ENCODE measurements at regions of chr19 and their contacts with region 1.

Region 1: GRCh38 chr19:52993323-52994178 is 20.2 kb upstream of the ERVV-1 start:
- DNase-seq: peak; percentile 76
- H3K4me3 ChIP-seq: peak overlapping the region; percentile 51 to 71 (median 64)
- H3K27ac ChIP-seq: peak overlapping the region; percentile 81
- H3K4me1 ChIP-seq: peaks cover 20% of the 10 kb centered on the region
- H3K27me3 ChIP-seq: no peaks in the 10 kb centered on the region
- CTCF ChIP-seq: peak in 1 of 2 donors; percentile 59
- POLR2A ChIP-seq: peak; percentile 69

Region 2: DNA sequence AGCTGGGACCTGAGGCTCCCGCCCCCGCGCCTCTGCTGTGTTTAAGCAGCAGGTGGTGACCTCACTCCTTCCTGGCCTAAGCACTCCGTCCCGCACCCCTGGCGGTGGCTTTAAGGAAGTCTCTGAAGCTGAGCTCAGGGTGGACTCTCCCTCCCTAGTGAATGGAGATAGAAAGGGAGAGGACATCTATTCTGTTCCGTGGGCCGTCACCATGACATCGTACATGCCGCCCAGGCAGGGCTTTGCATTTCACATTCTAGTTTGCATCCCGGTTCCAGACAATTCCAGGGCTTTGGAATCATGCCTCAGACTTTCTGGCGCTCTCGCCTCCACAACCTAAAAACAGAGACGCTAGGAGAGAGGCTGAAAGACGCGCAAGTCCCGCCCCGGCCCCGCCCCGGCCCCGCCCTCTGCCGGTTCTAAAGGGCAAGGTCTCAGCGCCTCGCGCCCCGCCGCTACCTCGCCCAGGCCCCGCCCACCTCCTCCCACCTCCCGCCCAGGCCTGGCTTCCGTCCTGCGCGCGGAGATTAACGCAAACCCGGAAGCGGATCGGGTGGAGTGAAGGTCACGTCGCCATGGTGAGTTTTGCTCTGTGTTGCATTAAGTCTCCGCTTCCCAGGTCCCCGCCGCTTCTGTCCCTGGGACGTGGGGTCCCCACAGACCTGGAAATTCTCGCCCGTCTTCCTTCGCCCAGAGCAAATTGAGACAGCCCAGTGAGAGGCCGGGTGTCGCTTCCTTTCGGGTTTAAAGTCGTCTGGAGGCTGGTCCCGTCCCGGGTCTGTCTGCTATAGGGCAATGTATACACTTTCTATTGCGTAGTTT is 466.2 kb before region 1 on chr19 and contains the start of gene ZNF808:
- CTCF ChIA-PET with region 1: no interaction called
- POLR2A ChIA-PET with region 1: no interaction called
- dilution Hi-C with region 1: no loop called
- intact Hi-C with region 1: loop called (anchors 5 kb)
- DNase-seq: peak; percentile 88
- H3K4me3 ChIP-seq: peak within 1 kb of the TSS; percentile 70 to 86 (median 83)
- H3K27ac ChIP-seq: peak within 1 kb of the TSS; percentile 78
- H3K4me1 ChIP-seq: peaks cover 3% of the 10 kb centered on the region
- H3K27me3 ChIP-seq: no peaks in the 10 kb centered on the region
- CTCF ChIP-seq: peak; percentile 59 to 61
- POLR2A ChIP-seq: peak; percentile 78
- total RNA-seq, gene ZNF808: 13.6 and 15.2 TPM in 2 replicates

Region 3: DNA sequence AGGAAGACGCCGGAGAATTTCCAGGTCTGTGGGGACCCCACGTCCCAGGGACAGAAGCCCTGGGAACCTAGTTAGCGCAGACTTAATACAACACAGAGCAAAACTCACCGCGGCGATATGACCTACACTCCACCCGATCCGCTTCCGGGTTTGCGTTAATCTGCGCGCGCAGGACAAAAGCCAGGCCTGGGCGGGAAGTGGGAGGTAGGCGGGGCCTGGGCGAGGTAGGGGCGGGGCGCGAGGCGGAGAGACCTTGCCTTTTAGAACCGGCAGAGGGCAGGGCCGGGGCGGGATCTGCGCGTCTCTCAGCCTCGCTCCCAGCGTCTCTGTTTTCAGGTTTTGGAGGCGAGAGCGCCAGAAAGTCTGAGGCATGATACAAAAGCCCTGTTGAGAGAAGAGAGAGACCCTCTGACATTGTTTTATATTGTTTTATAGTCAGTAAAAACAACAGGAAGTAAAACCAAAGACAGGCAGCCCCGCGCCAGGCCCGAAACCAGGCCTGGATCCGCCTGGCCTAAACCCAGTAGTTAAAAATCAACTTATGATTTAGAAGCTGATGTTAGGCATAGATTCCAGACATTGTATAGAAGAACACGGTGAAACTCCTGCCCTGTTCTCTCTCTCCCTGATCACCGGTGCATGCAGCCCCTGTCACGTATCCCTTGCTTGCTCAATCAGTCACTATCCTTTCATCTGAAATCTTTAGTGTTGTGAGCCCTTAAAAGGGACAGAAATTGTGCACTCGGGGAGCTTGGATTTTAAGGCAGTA is 258.5 kb before region 1 on chr19 and contains the start of gene ZNF611:
- CTCF ChIA-PET with region 1: no interaction called
- POLR2A ChIA-PET with region 1: no interaction called
- dilution Hi-C with region 1: no loop called
- intact Hi-C with region 1: loop called (anchors 1 kb)
- DNase-seq: peak; percentile 97
- H3K4me3 ChIP-seq: peak within 1 kb of the TSS; percentile 47 to 96 (median 93)
- H3K27ac ChIP-seq: peak within 1 kb of the TSS; percentile 84
- H3K4me1 ChIP-seq: peaks cover 9% of the 10 kb centered on the region
- H3K27me3 ChIP-seq: no peaks in the 10 kb centered on the region
- CTCF ChIP-seq: peak; percentile 55 to 73
- POLR2A ChIP-seq: peak; percentile 90
- total RNA-seq, gene ZNF611: 20.0 and 24.2 TPM in 2 replicates

Region 4: DNA sequence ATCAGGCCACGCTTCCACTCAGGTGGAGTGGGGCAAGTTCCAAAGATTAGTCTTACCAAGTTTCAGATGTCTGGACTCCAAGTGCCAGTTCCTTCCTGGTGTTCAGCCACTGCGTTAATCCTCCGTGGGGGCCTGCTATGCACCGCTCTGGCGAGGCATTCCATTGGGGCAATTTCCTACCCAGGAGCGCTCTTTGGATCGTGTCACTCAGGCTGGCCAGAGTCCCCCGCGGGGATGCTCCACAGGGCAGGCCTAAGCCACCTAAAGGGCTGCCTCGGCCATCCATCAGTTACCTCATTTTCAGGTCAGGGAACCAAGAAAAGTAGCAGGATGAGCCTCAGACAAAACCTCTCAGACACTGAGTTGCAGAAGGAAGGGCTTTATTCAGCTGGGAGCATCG is 89.5 kb before region 1 on chr19:
- CTCF ChIA-PET with region 1: no interaction called
- POLR2A ChIA-PET with region 1: no interaction called
- dilution Hi-C with region 1: no loop called
- intact Hi-C with region 1: no loop called
- DNase-seq: no peak
- H3K4me3 ChIP-seq: no peak overlapping the region
- H3K27ac ChIP-seq: no peak overlapping the region
- H3K4me1 ChIP-seq: no peaks in the 10 kb centered on the region
- H3K27me3 ChIP-seq: no peaks in the 10 kb centered on the region
- CTCF ChIP-seq: no peak
- POLR2A ChIP-seq: no peak

Region 5: DNA sequence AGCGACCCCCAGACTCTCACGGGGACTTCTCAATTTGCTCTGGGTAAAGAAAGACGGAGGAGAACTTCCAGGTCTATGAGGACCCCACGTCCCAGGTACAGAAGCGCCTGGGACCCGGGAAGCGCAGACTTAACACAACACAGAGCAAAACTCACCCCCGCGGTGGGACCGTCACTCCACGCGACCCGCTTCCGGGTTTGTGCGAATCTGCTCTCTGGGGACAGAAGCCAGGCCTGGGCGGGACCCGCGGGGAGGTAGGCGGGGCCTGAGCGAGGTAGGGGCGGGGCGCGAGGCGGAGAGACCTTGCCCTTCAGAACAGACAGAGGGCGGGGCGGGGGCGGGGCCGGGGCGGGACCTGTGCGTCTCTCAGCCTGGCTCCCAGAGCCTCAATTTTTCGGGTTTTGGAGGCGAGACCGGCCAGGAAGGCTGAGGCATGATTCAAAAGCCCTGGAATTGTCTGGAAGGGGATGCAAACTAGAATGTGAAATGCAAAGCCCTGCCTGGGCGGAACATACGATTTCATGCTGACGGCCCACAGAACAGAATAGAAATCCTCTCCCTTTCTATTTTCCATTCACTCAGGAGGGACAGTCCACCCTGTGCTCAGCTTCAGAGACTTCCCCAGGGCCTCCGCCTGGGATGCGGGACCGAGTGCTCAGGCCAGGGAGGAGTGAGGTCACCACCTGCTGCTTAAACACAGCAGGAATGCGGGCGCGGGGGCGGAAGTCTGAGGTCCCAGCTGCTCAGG is 51.0 kb before region 1 on chr19:
- CTCF ChIA-PET with region 1: no interaction called
- POLR2A ChIA-PET with region 1: no interaction called
- dilution Hi-C with region 1: no loop called
- intact Hi-C with region 1: loop called (anchors 1 kb)
- DNase-seq: peak; percentile 85
- H3K4me3 ChIP-seq: peak overlapping the region; percentile 76 to 94 (median 87)
- H3K27ac ChIP-seq: peak overlapping the region; percentile 65
- H3K4me1 ChIP-seq: no peaks in the 10 kb centered on the region
- H3K27me3 ChIP-seq: no peaks in the 10 kb centered on the region
- CTCF ChIP-seq: no peak
- POLR2A ChIP-seq: peak; percentile 60

Region 6: GRCh38 chr19:53086949-53087348 is 93.4 kb after region 1 on chr19:
- CTCF ChIA-PET with region 1: interaction called, 3 read pairs
- POLR2A ChIA-PET with region 1: no interaction called
- dilution Hi-C with region 1: no loop called
- intact Hi-C with region 1: loop called (anchors 5 kb)
- DNase-seq: peak; percentile 94
- H3K4me3 ChIP-seq: no peak overlapping the region
- H3K27ac ChIP-seq: peak overlapping the region; percentile 92
- H3K4me1 ChIP-seq: peaks cover 23% of the 10 kb centered on the region
- H3K27me3 ChIP-seq: no peaks in the 10 kb centered on the region
- CTCF ChIP-seq: no peak
- POLR2A ChIP-seq: peak; percentile 50

Region 7: GRCh38 chr19:53158119-53158656 is 164.6 kb after region 1 on chr19:
- CTCF ChIA-PET with region 1: interaction called, 3 read pairs
- POLR2A ChIA-PET with region 1: no interaction called
- dilution Hi-C with region 1: no loop called
- intact Hi-C with region 1: loop called (anchors 1 kb)
- DNase-seq: peak; percentile 18
- H3K4me3 ChIP-seq: peak overlapping the region; percentile 50 to 68 (median 66)
- H3K27ac ChIP-seq: no peak overlapping the region
- H3K4me1 ChIP-seq: peaks cover 8% of the 10 kb centered on the region
- H3K27me3 ChIP-seq: no peaks in the 10 kb centered on the region
- CTCF ChIP-seq: no peak
- POLR2A ChIP-seq: no peak